ENCODE measurements at regions of chr2 and their contacts with region 1.

Region 1: DNA sequence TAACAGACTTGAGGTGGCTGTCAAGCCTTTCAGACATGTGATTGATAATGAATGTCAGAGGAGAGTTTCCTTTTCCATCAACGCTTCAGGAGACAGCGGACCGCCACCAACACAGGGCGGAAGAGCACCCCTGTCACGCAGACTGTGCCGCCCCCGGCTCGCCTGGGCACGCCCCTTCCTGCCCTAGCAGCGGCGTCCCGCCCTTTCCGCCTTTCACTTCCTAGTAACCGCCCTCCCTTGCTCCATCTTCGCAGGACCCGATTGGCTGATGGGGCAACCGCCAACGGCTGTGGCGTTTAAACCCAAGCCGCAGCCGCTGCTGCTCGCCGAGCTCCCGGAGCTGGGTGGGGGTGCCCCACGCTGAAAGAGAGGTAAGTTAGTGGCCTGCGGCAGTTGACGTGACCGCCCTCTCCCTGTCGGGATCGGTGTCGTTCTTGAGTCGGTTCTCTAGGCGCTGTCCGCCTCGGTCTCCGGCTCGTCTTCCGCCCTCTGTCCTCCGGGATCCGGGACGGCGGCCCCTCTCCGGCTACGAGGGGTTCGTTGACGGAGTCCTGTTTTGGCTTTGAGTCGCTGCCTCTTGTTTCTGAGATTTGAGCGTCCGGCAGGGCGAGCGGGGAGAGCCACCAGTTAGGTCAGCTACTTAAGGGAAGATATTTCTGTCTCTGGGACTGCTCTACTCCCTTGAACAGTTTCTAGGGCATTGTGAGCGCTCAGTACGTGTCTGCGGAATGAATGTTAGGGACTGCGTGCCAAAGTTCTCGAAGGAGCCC is at the start of gene SGO2:
- DNase-seq: peak; percentile 84 to 95 (median 94)
- ATAC-seq: peak; percentile 100
- H3K4me3 ChIP-seq: peak within 1 kb of the TSS; percentile 74
- H3K4me3 Mint-ChIP-seq: peak within 1 kb of the TSS; percentile 88 to 95 (median 92)
- H3K27ac ChIP-seq: peak within 1 kb of the TSS; percentile 64
- H3K27ac Mint-ChIP-seq: peak within 1 kb of the TSS; percentile 66 to 89 (median 85)
- H3K4me1 ChIP-seq: peaks cover 6 to 8% of the 10 kb centered on the region in 2 donors
- H3K4me1 Mint-ChIP-seq: peaks cover 7 to 34% (median 9%) of the 10 kb centered on the region in 7 donors
- H3K27me3 ChIP-seq: no peaks in the 10 kb centered on the region
- H3K27me3 Mint-ChIP-seq: peaks cover 0 to 1% (median 0%) of the 10 kb centered on the region in 5 donors
- total RNA-seq, gene SGO2: 1.4 to 32.3 (median 2.9) TPM

Region 2: DNA sequence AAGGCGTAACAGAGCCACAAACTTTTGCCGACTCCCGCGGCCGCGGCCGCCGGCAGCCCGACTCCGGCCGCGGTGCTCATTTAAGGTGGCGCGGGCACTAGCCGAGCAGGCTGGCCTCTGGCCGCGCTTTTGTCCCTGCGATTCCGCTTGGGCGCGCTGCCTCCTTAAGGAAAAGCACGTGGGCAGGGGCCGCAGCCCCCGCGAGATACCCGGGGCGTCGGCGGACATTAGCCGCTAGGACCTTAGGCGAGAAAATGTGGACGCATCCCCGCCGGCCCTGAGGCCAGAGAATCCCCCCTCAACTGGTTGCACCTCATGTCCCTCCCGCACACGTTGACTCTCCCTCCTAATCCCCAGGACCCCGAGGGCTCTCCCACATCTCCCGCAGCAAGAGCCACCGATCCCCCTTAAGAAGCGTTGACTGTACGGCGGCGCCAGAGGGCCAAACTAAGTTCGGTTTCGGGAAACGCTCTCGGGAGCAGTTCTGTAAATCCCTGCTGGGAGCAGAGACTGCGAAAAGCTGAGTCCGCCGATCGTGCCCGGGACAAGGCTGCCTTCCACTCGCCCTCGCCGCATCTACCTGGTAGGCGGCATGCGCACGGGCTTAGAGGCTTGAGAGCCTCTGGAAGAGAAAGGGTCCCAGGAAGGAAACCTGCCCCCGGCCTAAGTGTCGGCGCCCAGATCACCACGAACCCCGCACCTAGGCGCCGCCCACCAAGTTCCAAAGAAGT is 1066.6 kb before region 1 on chr2:
- CTCF ChIA-PET with region 1: no interaction called
- POLR2A ChIA-PET with region 1: no interaction called
- intact Hi-C with region 1: loop called in 1 of 2 experiments (anchors 10 kb)
- DNase-seq: peak in 8 of 9 donors; percentile 36 to 64 (median 48)
- ATAC-seq: peak; percentile 54
- H3K4me3 ChIP-seq: peak overlapping the region; percentile 94
- H3K4me3 Mint-ChIP-seq: peak overlapping the region; percentile 93 to 98 (median 94)
- H3K27ac ChIP-seq: peak overlapping the region; percentile 32
- H3K27ac Mint-ChIP-seq: peak overlapping the region; percentile 5 to 86 (median 73)
- H3K4me1 ChIP-seq: peaks cover 10 to 30% of the 10 kb centered on the region in 2 donors
- H3K4me1 Mint-ChIP-seq: peaks cover 6 to 44% (median 31%) of the 10 kb centered on the region in 7 donors
- H3K27me3 ChIP-seq: peaks cover 12 to 56% of the 10 kb centered on the region in 2 donors
- H3K27me3 Mint-ChIP-seq: peaks cover 44 to 77% (median 48%) of the 10 kb centered on the region in 5 donors

Region 3: GRCh38 chr2:199979832-199980628 is 546.0 kb before region 1 on chr2:
- CTCF ChIA-PET with region 1: no interaction called
- POLR2A ChIA-PET with region 1: no interaction called
- intact Hi-C with region 1: loop called in 1 of 2 experiments (anchors 5 kb)
- DNase-seq: peak; percentile 42 to 79 (median 71)
- ATAC-seq: peak; percentile 85
- H3K4me3 ChIP-seq: no peak overlapping the region
- H3K4me3 Mint-ChIP-seq: peak overlapping the region in 1 of 10 donors; percentile 39
- H3K27ac ChIP-seq: no peak overlapping the region
- H3K27ac Mint-ChIP-seq: no peak overlapping the region
- H3K4me1 ChIP-seq: no peaks in the 10 kb centered on the region
- H3K4me1 Mint-ChIP-seq: peaks cover 0 to 22% (median 0%) of the 10 kb centered on the region in 7 donors
- H3K27me3 ChIP-seq: no peaks in the 10 kb centered on the region
- H3K27me3 Mint-ChIP-seq: peaks cover 0 to 2% (median 0%) of the 10 kb centered on the region in 5 donors

Region 4: GRCh38 chr2:200515155-200515554 is 10.9 kb before region 1 on chr2:
- CTCF ChIA-PET with region 1: interaction called, 5 read pairs
- POLR2A ChIA-PET with region 1: interaction called, 25 read pairs
- intact Hi-C with region 1: loop called (anchors 1 kb)
- DNase-seq: peak in 5 of 9 donors; percentile 30 to 57 (median 45)
- ATAC-seq: peak; percentile 60
- H3K4me3 ChIP-seq: no peak overlapping the region
- H3K4me3 Mint-ChIP-seq: peak overlapping the region in 5 of 10 donors; percentile 2 to 56 (median 21)
- H3K27ac ChIP-seq: no peak overlapping the region
- H3K27ac Mint-ChIP-seq: peak overlapping the region; percentile 3 to 75 (median 51)
- H3K4me1 ChIP-seq: peaks cover 6 to 22% of the 10 kb centered on the region in 2 donors
- H3K4me1 Mint-ChIP-seq: peaks cover 0 to 12% (median 8%) of the 10 kb centered on the region in 7 donors
- H3K27me3 ChIP-seq: no peaks in the 10 kb centered on the region
- H3K27me3 Mint-ChIP-seq: peaks cover 0 to 4% (median 0%) of the 10 kb centered on the region in 5 donors

Region 5: DNA sequence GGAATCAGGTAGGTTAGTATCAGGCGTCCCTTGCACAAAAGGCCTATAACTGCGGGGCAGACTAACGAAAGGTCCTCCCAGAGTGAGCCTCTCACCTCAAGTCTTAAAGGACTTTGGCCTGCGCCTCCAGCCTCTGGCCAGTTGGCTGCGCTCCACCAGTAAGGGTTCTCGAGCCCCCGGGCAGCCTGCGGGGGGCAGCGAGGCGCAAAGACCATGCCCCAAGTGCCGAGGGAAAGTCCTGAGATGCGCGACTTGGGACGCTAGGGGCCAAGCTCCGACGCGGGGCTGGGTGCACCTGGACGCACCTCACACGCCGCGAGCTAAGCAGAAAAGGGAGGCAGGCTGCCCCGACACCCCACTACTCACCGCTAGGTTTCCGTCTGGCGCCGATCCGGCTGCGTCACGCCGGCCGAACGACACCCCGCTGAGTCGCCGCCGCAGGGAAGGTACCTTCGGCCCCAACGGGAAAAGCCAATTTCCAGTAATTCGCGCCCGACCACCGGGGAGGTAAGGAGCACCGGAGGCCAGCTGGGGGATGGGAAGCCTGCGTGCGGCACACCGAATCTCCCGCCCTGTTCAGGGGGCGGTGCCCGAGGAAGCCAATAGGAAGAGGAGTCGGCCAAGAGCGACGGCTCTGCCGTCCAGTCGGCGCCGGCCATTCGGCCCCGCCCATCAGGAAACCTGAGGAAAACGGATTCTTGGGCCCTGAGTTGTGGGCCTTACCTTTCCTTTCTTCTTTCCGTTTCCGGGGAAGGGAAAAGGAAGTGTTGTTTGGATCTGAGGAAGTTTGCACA is 437.3 kb after region 1 on chr2 and contains the start of gene ORC2:
- CTCF ChIA-PET with region 1: no interaction called
- POLR2A ChIA-PET with region 1: no interaction called
- intact Hi-C with region 1: loop called in 1 of 2 experiments (anchors 5 kb)
- DNase-seq: peak; percentile 92 to 97 (median 95)
- ATAC-seq: peak; percentile 98
- H3K4me3 ChIP-seq: peak within 1 kb of the TSS; percentile 89
- H3K4me3 Mint-ChIP-seq: peak within 1 kb of the TSS; percentile 89 to 100 (median 98)
- H3K27ac ChIP-seq: peak within 1 kb of the TSS; percentile 90
- H3K27ac Mint-ChIP-seq: peak within 1 kb of the TSS; percentile 96 to 100 (median 99)
- H3K4me1 ChIP-seq: peaks cover 21 to 32% of the 10 kb centered on the region in 2 donors
- H3K4me1 Mint-ChIP-seq: peaks cover 40 to 83% (median 70%) of the 10 kb centered on the region in 7 donors
- H3K27me3 ChIP-seq: no peaks in the 10 kb centered on the region
- H3K27me3 Mint-ChIP-seq: no peaks in the 10 kb centered on the region
- total RNA-seq, gene ORC2: 29.8 to 78.0 (median 56.2) TPM

Region 6: DNA sequence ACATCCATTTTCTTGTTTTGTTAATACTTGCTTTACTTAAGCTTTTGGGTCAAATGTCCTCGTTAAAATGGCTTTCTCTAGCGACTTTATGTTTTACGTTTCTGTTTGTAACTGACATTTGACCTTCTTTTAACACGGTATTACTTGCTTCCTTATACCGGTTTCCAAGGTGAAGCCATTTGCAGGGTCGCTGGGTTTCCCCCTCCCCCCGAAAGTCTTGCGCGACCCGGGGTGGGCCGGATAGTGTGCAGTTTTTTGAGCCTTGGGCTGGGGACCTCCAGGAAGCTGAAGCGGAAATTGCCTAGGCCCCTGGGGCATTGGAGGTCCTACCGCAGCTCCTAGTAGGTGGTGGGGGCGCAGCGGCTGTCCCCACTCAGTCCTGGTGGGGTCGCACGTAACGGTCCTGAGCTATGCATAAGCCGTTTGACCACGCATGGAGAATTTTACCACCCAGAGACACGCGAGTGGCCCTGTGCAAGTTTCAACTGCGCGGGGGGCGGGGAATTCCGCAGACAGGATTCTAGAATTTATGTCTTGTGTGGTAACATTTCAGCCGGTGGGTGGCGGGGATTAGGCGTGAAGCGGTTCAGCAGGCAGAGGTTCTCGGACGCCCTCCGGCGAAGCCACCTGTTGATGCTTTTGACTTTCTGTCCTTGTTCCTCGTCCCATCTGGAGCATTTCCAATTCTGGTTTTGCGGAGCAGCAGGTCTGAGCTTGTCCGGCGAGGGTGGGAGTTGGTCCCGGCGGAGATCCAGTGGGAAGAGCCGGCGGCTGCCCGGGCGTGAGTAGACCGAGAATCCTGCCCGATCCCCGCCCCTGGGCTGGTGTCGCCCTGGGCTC is 592.3 kb after region 1 on chr2:
- CTCF ChIA-PET with region 1: no interaction called
- POLR2A ChIA-PET with region 1: no interaction called
- intact Hi-C with region 1: no loop called
- DNase-seq: peak; percentile 66 to 85 (median 79)
- ATAC-seq: peak; percentile 65
- H3K4me3 ChIP-seq: peak overlapping the region; percentile 87
- H3K4me3 Mint-ChIP-seq: peak overlapping the region; percentile 90 to 100 (median 97)
- H3K27ac ChIP-seq: peak overlapping the region; percentile 93
- H3K27ac Mint-ChIP-seq: peak overlapping the region; percentile 90 to 100 (median 98)
- H3K4me1 ChIP-seq: peaks cover 23 to 36% of the 10 kb centered on the region in 2 donors
- H3K4me1 Mint-ChIP-seq: peaks cover 31 to 64% (median 50%) of the 10 kb centered on the region in 7 donors
- H3K27me3 ChIP-seq: no peaks in the 10 kb centered on the region
- H3K27me3 Mint-ChIP-seq: peaks cover 0 to 2% (median 0%) of the 10 kb centered on the region in 5 donors

Region 7: GRCh38 chr2:201780674-201781581 is 1254.9 kb after region 1 on chr2 and contains the start of gene ALS2:
- CTCF ChIA-PET with region 1: no interaction called
- POLR2A ChIA-PET with region 1: interaction called, 4 read pairs
- intact Hi-C with region 1: loop called in 1 of 2 experiments (anchors 5 kb)
- DNase-seq: peak; percentile 91 to 97 (median 95)
- ATAC-seq: peak; percentile 96
- H3K4me3 ChIP-seq: peak within 1 kb of the TSS; percentile 96
- H3K4me3 Mint-ChIP-seq: peak within 1 kb of the TSS; percentile 87 to 99 (median 98)
- H3K27ac ChIP-seq: peak within 1 kb of the TSS; percentile 84
- H3K27ac Mint-ChIP-seq: peak within 1 kb of the TSS; percentile 84 to 99 (median 97)
- H3K4me1 ChIP-seq: peaks cover 7 to 10% of the 10 kb centered on the region in 2 donors
- H3K4me1 Mint-ChIP-seq: peaks cover 5 to 36% (median 21%) of the 10 kb centered on the region in 7 donors
- H3K27me3 ChIP-seq: no peaks in the 10 kb centered on the region
- H3K27me3 Mint-ChIP-seq: peaks cover 0 to 22% (median 0%) of the 10 kb centered on the region in 5 donors
- total RNA-seq, gene ALS2: 8.9 to 13.5 (median 10.7) TPM